HEK293T (cell line): ENCODE measurements at regions of chr12 and their contacts with region 1.

Region 1: GRCh38 chr12:6723607-6724396 is at the start of gene COPS7A:
- DNase-seq: peak; percentile 95

Region 2: DNA sequence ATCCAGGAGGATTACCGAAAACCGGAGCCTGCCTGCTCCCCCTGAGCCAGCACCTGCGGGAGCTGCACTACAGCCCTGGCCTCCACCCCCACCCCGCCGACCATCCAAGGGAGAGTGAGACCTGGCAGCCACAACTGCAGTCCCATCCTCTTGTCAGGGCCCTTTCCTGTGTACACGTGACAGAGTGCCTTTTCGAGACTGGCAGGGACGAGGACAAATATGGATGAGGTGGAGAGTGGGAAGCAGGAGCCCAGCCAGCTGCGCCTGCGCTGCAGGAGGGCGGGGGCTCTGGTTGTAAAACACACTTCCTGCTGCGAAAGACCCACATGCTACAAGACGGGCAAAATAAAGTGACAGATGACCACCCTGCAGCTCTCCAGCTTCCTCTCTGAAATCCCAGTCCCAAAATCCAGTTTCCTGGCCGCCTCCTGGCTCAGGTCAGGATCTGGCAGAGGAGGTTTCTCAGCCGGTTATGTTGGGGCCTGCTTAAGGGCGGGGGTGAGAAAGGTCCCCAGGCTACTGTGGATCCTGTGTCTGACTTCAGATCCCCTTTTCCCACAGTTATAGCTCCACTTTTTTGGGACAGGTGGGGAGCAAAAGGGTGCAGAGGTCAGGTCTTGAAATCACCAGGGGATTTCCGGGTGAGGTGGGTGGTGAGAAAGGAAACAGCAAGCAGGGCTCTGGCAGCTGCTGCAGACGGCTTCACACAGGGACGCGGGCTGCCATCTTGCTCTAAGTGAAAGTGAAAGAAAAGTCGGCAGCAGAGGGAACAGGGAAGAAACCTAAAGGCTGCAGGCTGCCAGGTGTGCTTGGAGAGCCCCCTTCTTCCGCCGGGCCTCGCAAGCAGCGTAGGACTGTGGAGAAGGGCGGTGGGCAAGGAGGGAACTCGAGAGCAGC is 272.2 kb before region 1 on chr12 and contains the start of gene TAPBPL:
- CTCF ChIA-PET with region 1: no interaction called
- POLR2A ChIA-PET with region 1: no interaction called
- DNase-seq: peak; percentile 53

Region 3: GRCh38 chr12:6613776-6614512 is 109.9 kb before region 1 on chr12:
- CTCF ChIA-PET with region 1: no interaction called
- POLR2A ChIA-PET with region 1: interaction called, 18 read pairs
- DNase-seq: peak; percentile 87

Region 4: DNA sequence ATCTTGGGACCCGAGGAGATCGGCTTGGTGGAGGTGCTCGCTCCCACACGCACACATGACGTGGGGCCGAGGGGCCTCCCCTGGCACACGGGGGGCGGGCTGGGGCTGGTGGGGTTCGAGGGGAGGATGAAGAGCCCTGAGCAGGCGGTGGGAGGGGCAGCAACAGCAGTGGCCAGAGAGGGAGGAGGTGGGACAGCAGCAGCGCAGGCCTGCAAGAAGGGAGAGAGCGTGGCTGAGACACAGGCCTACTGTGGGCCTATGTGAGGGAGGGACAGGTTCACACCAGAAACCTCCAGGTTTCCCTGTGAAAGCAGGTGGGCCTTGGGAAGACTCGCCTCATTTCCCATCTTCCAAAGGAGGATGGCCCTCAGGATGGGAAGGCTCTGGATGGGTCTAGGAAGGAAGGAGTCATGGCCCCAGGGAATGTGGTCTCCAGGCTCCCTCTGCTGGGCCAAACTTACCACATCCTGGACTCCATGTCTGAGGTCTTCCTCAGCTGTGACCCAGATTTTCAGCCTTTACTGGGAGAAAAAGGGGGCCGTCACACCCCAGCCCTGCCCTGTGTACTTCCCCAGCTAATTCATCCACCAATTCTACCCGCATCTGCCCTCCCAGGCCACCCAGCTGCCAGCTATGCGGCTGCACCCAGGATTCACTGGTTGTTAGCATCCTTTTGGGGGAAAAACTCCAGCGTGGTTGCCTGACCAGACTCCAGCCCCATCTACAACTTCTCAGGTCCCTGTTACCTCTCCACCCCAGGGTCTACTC is 26.0 kb before region 1 on chr12:
- CTCF ChIA-PET with region 1: no interaction called
- POLR2A ChIA-PET with region 1: interaction called, 38 read pairs
- DNase-seq: peak; percentile 65

Region 5: DNA sequence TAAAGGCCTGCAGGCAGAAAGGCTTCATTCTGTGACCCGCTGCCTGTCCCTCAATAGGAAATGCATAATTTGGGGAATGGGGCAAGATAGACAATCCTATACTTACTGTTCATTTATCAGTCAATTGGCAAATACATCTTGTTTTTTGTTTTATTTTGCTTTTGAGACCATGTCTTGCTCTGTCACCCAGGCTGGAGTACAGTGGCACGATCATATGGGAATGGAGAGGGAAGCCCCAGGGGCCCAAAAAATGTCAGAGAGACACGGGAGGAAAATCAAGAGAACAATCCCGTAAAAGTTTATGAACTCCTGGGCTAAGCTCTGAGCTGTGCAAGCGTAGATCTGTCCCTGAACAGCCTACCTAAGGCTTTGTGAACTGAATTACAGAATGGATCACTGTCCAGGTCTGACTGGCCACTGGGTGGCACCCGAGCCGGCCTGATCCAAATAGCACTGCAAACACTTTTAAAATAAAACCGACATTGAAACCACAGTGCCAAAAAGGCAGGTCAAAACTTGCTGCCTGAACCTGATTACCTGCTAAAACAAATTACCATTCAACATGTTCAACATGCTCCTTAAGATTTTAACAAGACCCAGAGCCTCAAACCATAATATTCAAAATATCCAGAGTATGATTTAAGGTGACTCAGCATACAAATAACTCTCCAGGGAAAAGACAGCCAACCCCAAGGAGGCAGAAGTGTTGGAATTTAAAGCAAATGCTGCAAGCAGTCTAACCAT is 11.8 kb after region 1 on chr12:
- CTCF ChIA-PET with region 1: interaction called, 3 read pairs
- POLR2A ChIA-PET with region 1: interaction called, 25 read pairs
- DNase-seq: peak; percentile 63

Region 6: GRCh38 chr12:6825398-6826124 is 101.8 kb after region 1 on chr12:
- CTCF ChIA-PET with region 1: interaction called, 6 read pairs
- POLR2A ChIA-PET with region 1: interaction called, 13 read pairs
- DNase-seq: peak; percentile 85